ENCODE measurements at regions of chr3 and their contacts with region 1.

Region 1: DNA sequence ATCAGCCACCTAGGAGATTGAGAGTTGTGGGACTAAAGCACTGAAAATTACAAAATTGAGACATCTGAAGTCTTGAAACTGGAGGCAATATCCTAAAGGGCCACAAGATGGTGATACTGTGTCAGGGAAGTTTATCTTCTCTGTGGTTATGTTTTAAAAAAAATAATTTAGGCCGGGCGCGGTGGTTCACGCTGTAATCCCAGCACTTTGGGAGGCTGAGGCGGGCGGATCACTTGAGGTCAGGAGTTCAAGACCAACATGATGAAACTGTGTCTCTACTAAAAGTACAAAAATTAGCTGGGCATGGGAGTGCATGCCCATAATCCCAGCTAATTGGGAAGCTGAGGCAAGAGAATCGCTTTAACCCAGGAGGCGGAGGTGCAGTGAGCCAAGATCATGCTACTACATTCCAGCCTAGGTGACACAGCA is 17.9 kb upstream of the NIT2 start:
- DNase-seq: peak; percentile 28
- H3K4me3 Mint-ChIP-seq: no peak overlapping the region
- H3K27ac Mint-ChIP-seq: peak overlapping the region; percentile 18
- H3K4me1 Mint-ChIP-seq: peaks cover 15% of the 10 kb centered on the region
- H3K27me3 Mint-ChIP-seq: no peaks in the 10 kb centered on the region

Region 2: GRCh38 chr3:99833617-99834205 is 482.9 kb before region 1 on chr3:
- intact Hi-C with region 1: loop called (anchors 2 kb)
- DNase-seq: no peak
- H3K4me3 Mint-ChIP-seq: no peak overlapping the region
- H3K27ac Mint-ChIP-seq: no peak overlapping the region
- H3K4me1 Mint-ChIP-seq: peaks cover 12% of the 10 kb centered on the region
- H3K27me3 Mint-ChIP-seq: no peaks in the 10 kb centered on the region

Region 3: DNA sequence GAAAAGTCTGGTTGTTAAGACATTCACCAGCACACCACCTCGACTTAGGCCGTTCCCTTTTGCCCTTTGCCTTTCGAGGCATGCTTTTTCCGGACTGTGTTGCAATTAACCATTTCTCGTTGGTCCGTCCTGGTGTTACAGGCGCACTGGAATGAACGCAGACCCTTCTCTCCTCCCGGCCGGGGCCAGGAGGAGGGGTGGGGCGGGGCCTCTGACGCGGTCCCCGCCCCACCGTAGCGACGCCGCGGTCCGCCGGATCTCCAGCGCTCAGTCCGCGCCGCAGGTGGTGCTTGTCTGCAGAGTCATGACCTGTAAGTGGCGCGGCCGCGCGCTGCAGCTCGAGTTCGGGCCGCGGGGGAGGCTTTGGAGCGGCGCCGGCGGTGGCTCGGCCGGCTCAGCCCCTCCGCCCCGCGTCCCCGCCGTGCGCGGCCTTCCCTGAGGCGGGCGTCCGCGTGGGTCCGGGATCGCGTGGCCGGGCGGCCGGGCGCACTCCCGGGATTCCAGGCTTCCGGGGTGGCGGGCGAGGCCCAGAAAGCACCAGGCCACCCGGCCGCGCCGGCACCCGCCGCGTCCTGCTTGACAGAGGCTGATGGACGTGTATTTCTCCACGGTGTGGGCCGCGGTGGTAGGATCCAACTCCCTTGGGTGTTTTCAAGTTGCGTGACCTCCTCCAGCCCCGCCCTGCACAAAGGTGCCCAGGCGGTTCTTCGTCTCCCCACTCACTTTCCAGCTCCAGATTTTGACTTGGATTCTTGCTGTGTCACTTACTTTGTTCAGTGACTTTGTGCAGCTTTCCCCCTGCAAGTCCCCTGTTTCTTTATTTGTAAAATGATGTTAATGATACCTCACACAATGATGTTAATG is 18.1 kb after region 1 on chr3 and contains the start of gene NIT2:
- intact Hi-C with region 1: loop called (anchors 1 kb)
- DNase-seq: peak; percentile 73
- H3K4me3 Mint-ChIP-seq: peak within 1 kb of the TSS; percentile 94
- H3K27ac Mint-ChIP-seq: peak within 1 kb of the TSS; percentile 98
- H3K4me1 Mint-ChIP-seq: peaks cover 14% of the 10 kb centered on the region
- H3K27me3 Mint-ChIP-seq: no peaks in the 10 kb centered on the region
- total RNA-seq, gene NIT2: 65.9 and 69.5 TPM in 2 replicates

Region 4: GRCh38 chr3:100360757-100361496 is 44.3 kb after region 1 on chr3:
- intact Hi-C with region 1: no loop called
- DNase-seq: no peak
- H3K4me3 Mint-ChIP-seq: no peak overlapping the region
- H3K27ac Mint-ChIP-seq: no peak overlapping the region
- H3K4me1 Mint-ChIP-seq: no peaks in the 10 kb centered on the region
- H3K27me3 Mint-ChIP-seq: no peaks in the 10 kb centered on the region

Region 5: GRCh38 chr3:100463002-100463401 is 146.3 kb after region 1 on chr3:
- intact Hi-C with region 1: loop called (anchors 1 kb)
- DNase-seq: no peak
- H3K4me3 Mint-ChIP-seq: no peak overlapping the region
- H3K27ac Mint-ChIP-seq: no peak overlapping the region
- H3K4me1 Mint-ChIP-seq: peaks cover 11% of the 10 kb centered on the region
- H3K27me3 Mint-ChIP-seq: peaks cover 2% of the 10 kb centered on the region

Region 6: DNA sequence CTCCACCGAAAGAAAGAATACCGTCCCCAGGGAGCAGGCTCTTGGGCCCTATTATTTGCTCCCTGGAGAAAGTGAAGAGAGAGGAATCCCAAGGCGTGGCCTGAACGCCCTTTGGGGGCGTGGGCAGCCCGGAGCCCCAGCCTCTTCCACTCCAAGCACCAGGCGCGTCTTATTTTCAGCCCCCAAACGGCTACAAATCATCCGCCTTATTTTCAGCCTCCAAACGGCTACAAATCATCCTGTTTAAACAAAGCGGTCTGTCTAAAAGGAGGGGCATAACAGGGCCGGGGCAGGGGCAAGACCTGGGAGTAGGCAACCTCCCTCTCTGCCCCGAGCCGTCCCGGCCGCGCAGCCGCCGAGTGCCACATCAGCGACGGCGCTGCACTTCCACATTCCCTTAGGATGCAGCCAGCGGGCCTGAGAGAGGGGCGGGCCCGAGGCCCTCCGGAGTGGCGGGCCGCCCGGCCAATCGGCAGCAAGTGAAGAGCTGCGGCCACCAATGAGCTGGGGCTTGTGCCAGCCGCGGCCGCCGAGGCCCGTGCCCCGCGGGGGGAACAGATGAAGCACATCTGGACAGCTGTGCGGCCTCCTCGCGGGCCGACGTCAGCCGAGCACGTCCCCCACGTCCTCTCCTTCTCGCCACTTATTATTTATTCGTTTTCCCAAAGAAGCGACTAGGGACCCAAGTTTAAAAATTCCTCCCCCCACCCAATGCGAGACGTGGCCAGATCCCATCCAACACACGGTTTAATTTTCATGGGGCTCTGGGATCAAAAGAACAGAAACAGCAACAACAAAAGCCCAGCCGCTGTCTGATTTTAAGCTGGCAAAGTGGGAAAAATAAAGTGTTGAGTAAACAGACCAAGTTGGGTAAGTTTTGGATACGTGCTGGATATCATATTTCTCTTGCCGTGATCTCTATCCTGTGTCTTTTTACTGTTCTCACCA is 175.7 kb after region 1 on chr3 and contains the start of gene TMEM45A:
- intact Hi-C with region 1: loop called (anchors 10 kb)
- DNase-seq: peak; percentile 73
- H3K4me3 Mint-ChIP-seq: peak within 1 kb of the TSS; percentile 86
- H3K27ac Mint-ChIP-seq: no peak within 1 kb of the TSS
- H3K4me1 Mint-ChIP-seq: peaks cover 17% of the 10 kb centered on the region
- H3K27me3 Mint-ChIP-seq: peaks cover 18% of the 10 kb centered on the region
- total RNA-seq, gene TMEM45A: 0.13 and 0.34 TPM in 2 replicates

Region 7: DNA sequence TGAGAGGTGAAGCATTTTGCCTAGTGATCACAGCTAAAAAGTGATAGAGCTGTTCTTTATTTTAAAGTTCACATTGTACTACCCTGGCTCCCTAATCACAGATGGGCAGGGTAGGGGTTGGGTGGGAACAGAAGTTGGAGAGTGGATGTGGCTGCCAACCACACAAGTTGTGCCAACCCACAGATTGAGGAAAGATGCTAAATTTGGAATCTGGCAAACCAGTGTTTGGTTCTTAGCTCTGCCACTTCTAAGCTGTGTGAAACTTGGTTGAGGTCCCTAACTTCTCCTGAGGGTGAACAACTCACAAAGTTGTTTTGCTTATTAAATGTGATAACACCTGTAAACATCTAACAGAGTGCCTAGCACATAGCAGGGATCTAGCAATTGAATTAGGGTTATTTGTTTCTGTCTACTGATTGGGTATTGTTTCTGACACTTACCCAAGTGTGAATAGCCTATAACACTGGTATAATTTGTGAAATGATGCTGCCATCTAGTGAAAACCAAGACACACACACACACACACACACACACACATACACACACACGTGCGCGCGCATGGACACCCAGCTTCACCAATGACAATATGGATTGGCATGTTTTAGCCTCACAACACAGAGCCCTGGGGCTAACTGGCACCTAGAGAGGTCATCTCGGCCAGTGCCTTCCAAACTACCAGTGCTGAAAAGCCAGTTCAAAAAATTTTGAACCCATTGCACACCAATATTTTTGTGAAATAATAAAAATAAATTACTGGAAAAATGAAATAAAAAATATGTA is 318.0 kb after region 1 on chr3:
- intact Hi-C with region 1: loop called (anchors 1 kb)
- DNase-seq: peak; percentile 2
- H3K4me3 Mint-ChIP-seq: no peak overlapping the region
- H3K27ac Mint-ChIP-seq: no peak overlapping the region
- H3K4me1 Mint-ChIP-seq: peaks cover 9% of the 10 kb centered on the region
- H3K27me3 Mint-ChIP-seq: peaks cover 21% of the 10 kb centered on the region